H1 (cell line): ENCODE measurements at regions of chr7 and their contacts with region 1.

Region 1: GRCh38 chr7:100691676-100692577 is 2.1 kb downstream of the GIGYF1 start:
- DNase-seq: peak; percentile 54 to 96
- H3K4me3 ChIP-seq: peak overlapping the region; percentile 82 to 95 (median 90)
- H3K27ac ChIP-seq: no peak overlapping the region
- H3K4me1 ChIP-seq: peaks cover 6 to 20% (median 12%) of the 10 kb centered on the region in 4 experiments
- H3K27me3 ChIP-seq: no peaks in the 10 kb centered on the region
- CTCF ChIP-seq: peak in 2 of 3 experiments; percentile 87 to 93; a peak in 3 of 4 replicates
- EP300 ChIP-seq: no peak
- POLR2A ChIP-seq: peak in 1 of 2 experiments; percentile 66; a peak in 1 of 3 replicates
- RAD21 ChIP-seq: peak; percentile 66 to 80

Region 2: DNA sequence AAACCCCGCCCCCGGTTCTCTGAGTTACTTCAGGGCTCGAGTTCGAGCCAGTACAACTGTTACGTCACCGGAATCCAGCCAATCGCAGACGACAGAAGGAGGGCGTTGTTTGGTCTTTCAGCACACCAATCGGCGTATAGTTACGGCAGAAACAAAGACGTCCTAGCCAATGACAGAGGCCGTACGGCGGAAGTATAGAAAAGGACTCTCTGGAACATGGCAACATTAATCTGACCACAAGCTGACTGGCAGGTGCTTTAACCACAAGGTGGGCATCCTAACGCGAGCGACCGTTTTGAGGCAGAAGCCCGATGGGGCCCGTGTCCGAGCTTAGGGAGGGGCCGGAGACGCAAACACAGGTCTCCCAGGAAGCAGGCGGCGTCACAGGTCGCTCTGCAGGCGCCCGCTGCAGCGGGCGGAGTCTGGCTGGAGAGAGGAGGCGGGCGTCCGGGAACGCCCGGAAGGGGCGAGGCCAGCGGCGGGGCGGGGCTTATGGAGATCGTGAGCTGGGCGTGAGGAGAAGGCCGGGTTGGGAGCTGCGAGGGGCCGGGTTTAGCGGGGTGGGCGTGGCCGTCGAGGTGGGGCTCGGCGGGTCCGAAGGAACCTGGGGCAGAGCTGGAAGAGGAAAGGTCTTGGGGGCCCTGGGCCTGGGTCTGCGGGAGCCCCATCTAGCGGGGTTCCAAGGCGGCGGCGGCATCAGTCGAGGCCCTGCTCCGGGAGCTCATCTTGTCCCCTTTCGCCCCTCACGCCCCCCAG is 79.8 kb before region 1 on chr7 and contains the start of gene MOSPD3:
- CTCF ChIA-PET with region 1: interaction called, 65 read pairs
- POLR2A ChIA-PET with region 1: interaction called, 7 read pairs
- DNase-seq: peak; percentile 98 to 99
- H3K4me3 ChIP-seq: peak within 1 kb of the TSS; percentile 74 to 83 (median 76)
- H3K27ac ChIP-seq: peak within 1 kb of the TSS; percentile 98
- H3K4me1 ChIP-seq: peaks cover 0 to 6% (median 2%) of the 10 kb centered on the region in 4 experiments; a peak in 3 of 7 replicates
- H3K27me3 ChIP-seq: no peaks in the 10 kb centered on the region; a peak in 1 of 7 replicates
- CTCF ChIP-seq: no peak
- EP300 ChIP-seq: no peak
- POLR2A ChIP-seq: peak in 1 of 2 experiments; percentile 93; a peak in 2 of 3 replicates
- RAD21 ChIP-seq: no peak
- total RNA-seq, gene MOSPD3: 19.3 and 20.7 TPM in 2 replicates

Region 3: GRCh38 chr7:100626530-100627237 is 65.2 kb before region 1 on chr7:
- CTCF ChIA-PET with region 1: interaction called, 21 read pairs
- POLR2A ChIA-PET with region 1: interaction called, 3 read pairs
- DNase-seq: peak in 1 of 2 experiments; percentile 79
- H3K4me3 ChIP-seq: peak overlapping the region; percentile 24 to 63 (median 28)
- H3K27ac ChIP-seq: no peak overlapping the region
- H3K4me1 ChIP-seq: peaks cover 0 to 11% (median 6%) of the 10 kb centered on the region in 4 experiments; a peak in 6 of 7 replicates
- H3K27me3 ChIP-seq: peaks cover 0 to 5% (median 2%) of the 10 kb centered on the region in 4 experiments; a peak in 3 of 7 replicates
- CTCF ChIP-seq: no peak
- EP300 ChIP-seq: no peak
- POLR2A ChIP-seq: no peak
- RAD21 ChIP-seq: no peak

Region 4: DNA sequence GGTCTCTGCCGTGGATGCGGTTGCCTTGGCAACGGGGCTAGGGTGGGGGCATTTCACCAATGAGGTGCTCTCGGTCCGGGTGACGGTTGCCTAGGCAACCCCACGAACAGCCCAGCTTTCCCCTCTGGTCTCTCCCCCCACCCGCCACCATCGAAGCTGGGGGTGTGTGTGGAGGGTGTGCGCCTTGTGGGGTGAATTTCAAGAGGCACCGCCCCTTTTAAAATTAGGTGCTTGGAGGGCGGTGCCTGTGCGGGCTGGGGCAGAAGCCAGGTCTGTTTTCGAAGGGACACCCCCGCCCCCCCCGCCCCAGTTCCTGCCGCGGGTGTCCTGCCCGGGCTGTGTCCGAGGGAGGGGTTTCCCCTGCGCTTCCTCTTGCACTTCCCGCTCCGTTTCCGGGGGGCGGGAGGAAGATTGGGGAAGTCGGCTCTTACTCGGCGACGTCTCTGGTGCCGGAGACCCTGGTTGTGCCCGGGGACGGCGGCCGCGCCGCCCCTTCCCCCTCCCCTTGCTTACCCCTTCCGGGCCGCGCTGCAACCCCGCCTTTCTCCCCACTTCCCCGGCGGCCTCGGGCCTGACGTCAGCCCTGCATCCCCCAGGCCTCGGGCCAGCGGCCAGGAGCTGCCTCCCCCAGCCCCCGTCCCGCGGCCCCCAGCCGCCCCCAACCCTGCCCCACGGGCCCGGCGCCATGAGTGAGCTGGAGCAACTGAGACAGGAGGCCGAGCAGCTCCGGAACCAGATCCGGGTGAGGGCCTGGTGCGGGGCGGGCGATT is 16.2 kb before region 1 on chr7:
- CTCF ChIA-PET with region 1: interaction called, 134 read pairs
- POLR2A ChIA-PET with region 1: interaction called, 257 read pairs
- DNase-seq: peak in 1 of 2 experiments; percentile 80
- H3K4me3 ChIP-seq: peak overlapping the region; percentile 43 to 99 (median 62)
- H3K27ac ChIP-seq: no peak overlapping the region
- H3K4me1 ChIP-seq: peaks cover 0 to 7% (median 2%) of the 10 kb centered on the region in 4 experiments; a peak in 6 of 7 replicates
- H3K27me3 ChIP-seq: peaks cover 0 to 8% (median 6%) of the 10 kb centered on the region in 4 experiments; a peak in 4 of 7 replicates
- CTCF ChIP-seq: no peak
- EP300 ChIP-seq: no peak
- POLR2A ChIP-seq: no peak
- RAD21 ChIP-seq: no peak

Region 5: DNA sequence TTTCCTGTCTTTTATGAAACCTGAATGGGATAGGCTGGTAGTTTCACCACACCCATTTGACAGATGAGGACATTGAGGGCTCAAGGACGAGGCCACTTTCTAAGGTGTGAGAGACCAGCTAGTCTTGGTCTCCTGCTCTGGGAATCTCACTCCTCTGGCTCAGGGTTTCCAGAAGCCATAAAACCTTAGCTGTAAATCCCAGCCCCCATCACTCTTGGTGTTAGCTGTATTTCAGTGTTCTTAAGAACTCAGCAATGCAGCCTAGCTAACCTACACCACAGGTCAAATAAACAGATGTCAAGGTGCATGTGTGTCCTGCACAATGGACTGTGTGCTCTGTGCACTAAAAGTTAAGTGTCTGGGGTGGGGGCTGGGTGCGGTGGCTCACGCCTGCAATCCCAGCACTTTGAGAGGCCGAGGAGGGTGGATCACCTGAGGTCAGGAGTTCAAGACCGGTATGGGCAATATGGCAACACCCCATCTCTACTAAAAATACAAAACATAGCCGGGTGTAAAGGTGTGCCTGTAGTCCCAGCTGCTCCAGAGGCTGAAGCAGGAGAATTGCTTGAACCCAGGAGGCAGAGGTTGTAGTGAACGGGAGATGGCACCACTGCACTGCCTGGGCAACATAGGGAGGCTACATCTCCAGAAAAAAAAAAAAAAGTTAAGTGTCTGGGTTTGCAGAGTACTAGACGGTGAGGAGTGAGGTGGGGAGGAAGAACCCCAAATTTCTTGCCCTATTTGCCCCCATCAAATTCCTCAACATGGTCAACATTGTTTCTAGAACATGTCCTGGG is 27.8 kb after region 1 on chr7:
- CTCF ChIA-PET with region 1: interaction called, 254 read pairs
- POLR2A ChIA-PET with region 1: interaction called, 8 read pairs
- DNase-seq: no peak
- H3K4me3 ChIP-seq: peak overlapping the region; percentile 32 to 71 (median 50)
- H3K27ac ChIP-seq: no peak overlapping the region
- H3K4me1 ChIP-seq: peaks cover 0 to 5% (median 2%) of the 10 kb centered on the region in 4 experiments; a peak in 5 of 7 replicates
- H3K27me3 ChIP-seq: peaks cover 7 to 26% (median 26%) of the 10 kb centered on the region in 4 experiments
- CTCF ChIP-seq: peak; percentile 9 to 29 (median 22)
- EP300 ChIP-seq: no peak
- POLR2A ChIP-seq: no peak
- RAD21 ChIP-seq: peak; percentile 47 to 53

Region 6: GRCh38 chr7:100933735-100934134 is 241.8 kb after region 1 on chr7:
- CTCF ChIA-PET with region 1: no interaction called
- POLR2A ChIA-PET with region 1: no interaction called
- DNase-seq: peak in 1 of 2 experiments; percentile 62
- H3K4me3 ChIP-seq: no peak overlapping the region
- H3K27ac ChIP-seq: no peak overlapping the region
- H3K4me1 ChIP-seq: peaks cover 6 to 9% (median 8%) of the 10 kb centered on the region in 4 experiments
- H3K27me3 ChIP-seq: no peaks in the 10 kb centered on the region
- CTCF ChIP-seq: no peak
- EP300 ChIP-seq: no peak
- POLR2A ChIP-seq: no peak
- RAD21 ChIP-seq: no peak